ENCODE measurements at regions of chr4 and their contacts with region 1.

Region 1: GRCh38 chr4:88054901-88055300 is 47.5 kb downstream of the PKD2 start:
- DNase-seq: peak; percentile 48 to 76 (median 66)
- ATAC-seq: peak; percentile 99 to 100 (median 100)
- H3K4me3 ChIP-seq: no peak overlapping the region
- H3K27ac ChIP-seq: no peak overlapping the region
- H3K4me1 ChIP-seq: peaks cover 0 to 22% (median 0%) of the 10 kb centered on the region in 4 donors
- H3K27me3 ChIP-seq: no peaks in the 10 kb centered on the region
- CTCF ChIP-seq: peak; percentile 72 to 91 (median 80)
- POLR2A ChIP-seq: no peak

Region 2: GRCh38 chr4:87521757-87522374 is 533.0 kb before region 1 on chr4:
- intact Hi-C with region 1: no loop called
- DNase-seq: no peak
- ATAC-seq: no peak
- H3K4me3 ChIP-seq: no peak overlapping the region
- H3K27ac ChIP-seq: peak overlapping the region in 1 of 3 donors; percentile 7
- H3K4me1 ChIP-seq: peaks cover 0 to 8% (median 0%) of the 10 kb centered on the region in 4 donors
- H3K27me3 ChIP-seq: no peaks in the 10 kb centered on the region
- CTCF ChIP-seq: no peak
- POLR2A ChIP-seq: no peak

Region 3: DNA sequence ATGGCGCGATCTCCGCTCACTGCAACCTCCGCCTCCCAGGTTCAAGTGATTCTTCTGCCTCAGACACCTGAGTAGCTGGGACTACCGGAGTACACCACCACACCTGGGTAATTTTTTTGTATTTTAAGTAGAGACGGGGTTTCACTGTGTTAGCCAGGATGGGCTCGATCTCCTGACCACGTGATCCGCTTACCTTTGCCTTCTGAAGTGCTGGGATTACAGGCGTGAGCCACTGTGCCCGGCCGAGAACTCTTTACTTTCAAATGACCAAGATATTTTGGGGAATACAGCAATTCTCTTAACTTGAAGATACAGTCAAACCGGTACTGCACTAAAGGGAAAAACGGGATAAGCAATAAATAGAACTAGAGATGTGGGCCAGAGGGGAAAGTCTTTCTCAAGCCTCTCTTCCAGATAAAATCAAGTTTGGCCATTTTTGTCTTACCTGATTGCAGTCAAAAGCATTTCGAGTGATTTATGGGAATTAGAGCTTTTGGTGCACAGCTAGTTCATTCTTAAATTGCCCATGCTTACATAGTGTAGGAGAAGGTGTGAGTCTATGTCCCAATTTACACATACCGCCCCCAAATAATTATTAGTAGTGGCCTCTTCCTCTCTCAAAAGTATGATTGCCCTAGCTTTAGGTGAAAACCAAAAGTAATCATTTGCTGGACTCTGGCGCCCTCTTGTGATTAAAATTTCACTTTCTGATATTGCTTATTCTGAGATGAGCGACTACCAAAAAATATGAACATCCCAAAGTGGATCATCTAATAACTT is 156.8 kb after region 1 on chr4:
- intact Hi-C with region 1: loop called in 1 of 2 experiments (anchors 10 kb)
- DNase-seq: peak in 1 of 3 donors; percentile 54
- ATAC-seq: peak; percentile 75 to 87 (median 83)
- H3K4me3 ChIP-seq: no peak overlapping the region
- H3K27ac ChIP-seq: no peak overlapping the region
- H3K4me1 ChIP-seq: peaks cover 0 to 6% (median 2%) of the 10 kb centered on the region in 4 donors
- H3K27me3 ChIP-seq: no peaks in the 10 kb centered on the region
- CTCF ChIP-seq: peak; percentile 69 to 94 (median 71)
- POLR2A ChIP-seq: no peak

Region 4: DNA sequence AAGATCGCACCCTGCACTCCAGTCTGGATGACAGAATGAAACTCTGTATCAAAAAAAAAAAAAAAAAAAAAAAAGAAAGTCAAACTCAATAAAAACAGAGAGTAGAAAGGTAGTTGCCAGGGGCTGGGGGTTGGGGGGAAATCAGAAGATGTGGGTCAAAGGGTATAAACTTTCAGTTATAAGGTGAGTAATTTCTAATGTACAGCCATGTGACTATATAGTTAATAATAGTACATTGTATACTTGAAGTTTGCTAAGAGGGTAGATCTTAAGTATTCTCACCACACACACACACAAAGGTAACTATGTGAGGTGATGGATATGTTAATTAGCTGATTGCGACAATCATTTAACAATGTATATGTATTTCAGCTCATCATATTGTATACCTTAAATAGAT is 335.2 kb after region 1 on chr4:
- intact Hi-C with region 1: no loop called
- DNase-seq: no peak
- ATAC-seq: no peak
- H3K4me3 ChIP-seq: no peak overlapping the region
- H3K27ac ChIP-seq: no peak overlapping the region
- H3K4me1 ChIP-seq: no peaks in the 10 kb centered on the region
- H3K27me3 ChIP-seq: no peaks in the 10 kb centered on the region
- CTCF ChIP-seq: no peak
- POLR2A ChIP-seq: no peak

Measured in right lobe of liver (tissue), 6 donors.